ENCODE measurements at regions of chr12 and their contacts with region 1.

Region 1: GRCh38 chr12:118404876-118405521 is 28.6 kb downstream of the SUDS3 start:
- ATAC-seq: peak in 7 of 8 experiments; percentile 46 to 75 (median 53)
- H3K4me3 ChIP-seq: no peak overlapping the region
- H3K27ac ChIP-seq: no peak overlapping the region
- H3K4me1 ChIP-seq: peaks cover 0 to 2% of the 10 kb centered on the region in 2 donors

Region 2: GRCh38 chr12:117564881-117565280 is 840.1 kb before region 1 on chr12:
- in situ Hi-C with region 1: no loop called
- ATAC-seq: peak in 4 of 8 experiments; percentile 16 to 67 (median 44)
- H3K4me3 ChIP-seq: no peak overlapping the region
- H3K27ac ChIP-seq: no peak overlapping the region
- H3K4me1 ChIP-seq: peaks cover 22 to 25% of the 10 kb centered on the region in 2 donors

Region 3: GRCh38 chr12:118302066-118302465 is 102.9 kb before region 1 on chr12:
- in situ Hi-C with region 1: no loop called
- ATAC-seq: peak in 2 of 8 experiments; percentile 35 to 38
- H3K4me3 ChIP-seq: no peak overlapping the region
- H3K27ac ChIP-seq: no peak overlapping the region
- H3K4me1 ChIP-seq: no peaks in the 10 kb centered on the region

Region 4: GRCh38 chr12:118979763-118980406 is 574.9 kb after region 1 on chr12:
- in situ Hi-C with region 1: loop called in 1 of 9 experiments (anchors 25 kb)
- ATAC-seq: peak; percentile 7 to 75 (median 18)
- H3K4me3 ChIP-seq: peak overlapping the region; percentile 56 to 91 (median 71)
- H3K27ac ChIP-seq: peak overlapping the region; percentile 82 to 88
- H3K4me1 ChIP-seq: no peaks in the 10 kb centered on the region

Region 5: GRCh38 chr12:119544765-119545625 is 1140.0 kb after region 1 on chr12:
- in situ Hi-C with region 1: loop called in 2 of 9 experiments (anchors 25 kb)
- ATAC-seq: peak; percentile 63 to 87 (median 80)
- H3K4me3 ChIP-seq: no peak overlapping the region
- H3K27ac ChIP-seq: no peak overlapping the region
- H3K4me1 ChIP-seq: peaks cover 0 to 5% of the 10 kb centered on the region in 2 donors

Region 6: DNA sequence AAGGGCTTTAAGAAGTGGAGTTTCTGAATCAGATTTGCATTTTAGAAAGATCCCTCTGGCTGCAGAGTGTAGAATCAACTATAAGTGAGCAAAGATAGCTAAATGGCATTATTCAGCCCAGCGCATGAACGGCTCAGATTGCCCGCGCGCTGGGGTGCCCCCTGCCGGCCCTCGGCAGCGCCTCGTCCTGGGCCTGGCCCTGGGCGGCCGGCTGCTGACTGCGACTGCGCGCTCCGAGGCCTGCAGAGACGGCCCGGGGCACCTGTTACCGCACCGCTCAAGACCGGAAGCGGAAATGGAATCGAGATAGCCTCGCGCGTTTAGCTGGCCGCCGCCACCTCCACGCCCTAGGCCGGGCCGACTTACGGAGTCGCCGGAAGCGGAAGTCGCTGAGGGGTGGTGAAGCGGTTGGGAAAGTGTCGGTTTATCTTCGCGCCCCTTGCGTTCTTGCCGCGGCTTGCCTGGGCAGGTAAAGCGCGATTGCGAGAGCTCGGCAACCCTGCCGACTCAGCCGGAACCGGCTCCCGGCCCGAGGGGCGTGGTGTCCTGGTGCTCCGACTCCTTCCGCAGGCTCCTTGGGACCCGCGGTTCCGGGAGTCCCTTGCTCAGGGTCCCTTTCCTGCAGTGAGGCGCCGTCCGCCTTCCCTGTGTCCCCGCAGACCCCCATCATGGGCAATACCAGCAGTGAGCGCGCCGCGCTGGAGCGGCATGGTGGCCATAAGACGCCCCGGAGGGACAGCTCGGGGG is 1262.8 kb after region 1 on chr12 and contains the start of gene PRKAB1:
- in situ Hi-C with region 1: loop called in 1 of 9 experiments (anchors 25 kb)
- ATAC-seq: peak; percentile 93 to 99 (median 98)
- H3K4me3 ChIP-seq: peak within 1 kb of the TSS; percentile 72 to 99 (median 81)
- H3K27ac ChIP-seq: peak within 1 kb of the TSS; percentile 90 to 94
- H3K4me1 ChIP-seq: peaks cover 12 to 21% of the 10 kb centered on the region in 2 donors
- total RNA-seq, gene PRKAB1: 24.9 to 52.4 (median 34.9) TPM